ENCODE measurements at regions of chr3 and their contacts with region 1.

Region 1: DNA sequence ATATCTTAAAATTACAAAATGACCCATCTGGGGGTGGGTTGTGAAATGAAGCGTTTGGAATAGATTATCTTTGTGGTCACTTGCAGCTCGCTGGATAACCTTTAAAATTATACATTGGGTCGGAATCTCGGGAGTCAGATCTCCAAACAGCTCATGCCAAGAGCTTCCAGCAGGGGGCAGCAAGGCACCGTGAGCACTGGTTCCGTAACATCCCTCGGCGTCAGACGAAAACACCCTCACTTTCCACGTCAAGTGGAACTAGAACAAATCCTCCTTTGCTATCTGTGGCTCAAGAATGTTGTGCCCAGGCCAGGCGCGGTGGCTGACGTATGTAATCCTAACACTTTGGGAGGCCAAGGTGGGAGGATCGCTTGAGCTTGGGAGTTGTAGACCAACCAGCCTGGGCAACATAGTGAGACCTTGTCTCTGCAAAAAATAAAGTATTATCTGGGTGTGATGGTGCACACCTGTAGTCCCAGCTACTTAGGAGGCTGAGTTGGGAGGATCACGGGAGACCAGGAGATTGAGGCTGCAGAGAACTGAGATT is 31.1 kb downstream of the UMPS start:
- DNase-seq: peak; percentile 93
- H3K4me3 Mint-ChIP-seq: peak overlapping the region; percentile 58
- H3K27ac Mint-ChIP-seq: no peak overlapping the region
- H3K4me1 Mint-ChIP-seq: peaks cover 8% of the 10 kb centered on the region
- H3K27me3 Mint-ChIP-seq: no peaks in the 10 kb centered on the region

Region 2: DNA sequence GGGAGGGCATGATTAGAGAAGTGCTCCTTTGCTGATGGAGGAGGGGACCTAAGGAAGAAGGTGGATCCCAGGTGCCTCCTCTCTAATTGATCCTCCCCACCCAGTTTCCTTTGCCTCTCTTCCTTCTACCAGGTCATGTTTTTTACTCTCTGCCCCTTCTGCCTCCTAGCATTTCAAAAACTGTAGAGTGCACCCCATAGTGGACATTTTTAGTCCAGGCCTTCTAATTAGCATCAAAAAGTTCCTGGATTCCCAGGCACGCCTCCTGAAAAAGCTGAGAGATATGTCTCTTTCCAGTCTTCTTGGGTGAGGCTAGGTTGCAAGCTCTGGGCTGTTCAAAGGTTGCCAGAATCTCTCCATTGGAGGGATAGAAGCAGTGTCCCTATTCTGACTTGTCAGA is 144.5 kb after region 1 on chr3:
- intact Hi-C with region 1: loop called (anchors 1 kb)
- DNase-seq: no peak
- H3K4me3 Mint-ChIP-seq: no peak overlapping the region
- H3K27ac Mint-ChIP-seq: no peak overlapping the region
- H3K4me1 Mint-ChIP-seq: no peaks in the 10 kb centered on the region
- H3K27me3 Mint-ChIP-seq: peaks cover 22% of the 10 kb centered on the region

Region 3: GRCh38 chr3:125165189-125165947 is 404.0 kb after region 1 on chr3:
- intact Hi-C with region 1: loop called (anchors 10 kb)
- DNase-seq: no peak
- H3K4me3 Mint-ChIP-seq: no peak overlapping the region
- H3K27ac Mint-ChIP-seq: no peak overlapping the region
- H3K4me1 Mint-ChIP-seq: peaks cover 2% of the 10 kb centered on the region
- H3K27me3 Mint-ChIP-seq: peaks cover 41% of the 10 kb centered on the region

Measured in activated CD4-positive, alpha-beta T cell treated with anti-CD3 and anti-CD28 coated beads, Interleukin-2, amount 10 ng/mL, durations not matched to agents 24 days and 14 days (primary cell).